ENCODE measurements at regions of chr17 and their contacts with region 1.

Region 1: DNA sequence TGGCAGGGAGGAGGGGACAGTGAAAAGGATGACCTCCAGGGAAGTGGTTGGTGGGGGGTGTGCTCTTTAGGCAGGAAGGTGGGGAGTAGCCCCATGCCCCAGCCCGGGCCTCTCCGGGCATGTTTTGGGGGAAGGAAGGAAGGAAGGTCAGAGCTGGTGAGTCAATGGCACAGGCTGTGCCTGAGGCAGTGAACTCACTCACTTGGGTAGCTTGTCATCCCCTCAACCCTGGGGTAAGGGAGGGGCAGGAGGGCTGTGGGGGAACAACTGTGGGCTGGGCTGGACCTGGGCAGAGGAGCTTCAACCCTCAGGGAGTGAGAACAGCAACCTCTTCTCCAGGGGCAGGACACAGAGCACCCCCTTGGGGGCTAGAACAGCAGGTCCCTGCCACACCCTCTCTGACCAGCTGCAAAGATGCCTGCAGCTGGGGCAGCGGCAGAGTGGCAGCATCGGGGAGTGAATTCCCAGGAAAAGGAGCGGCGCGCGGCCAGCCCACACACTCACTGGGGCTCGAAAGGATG is 6.3 kb downstream of the CSF3 start:
- DNase-seq: peak in 2 of 5 donors; percentile 43 to 59
- H3K4me3 ChIP-seq: no peak overlapping the region
- H3K27ac ChIP-seq: peak overlapping the region in 1 of 2 donors; percentile 41
- H3K4me1 ChIP-seq: peaks cover 23% of the 10 kb centered on the region
- H3K27me3 ChIP-seq: no peaks in the 10 kb centered on the region
- CTCF ChIP-seq: no peak
- EP300 ChIP-seq: no peak
- POLR2A ChIP-seq: no peak

Region 2: DNA sequence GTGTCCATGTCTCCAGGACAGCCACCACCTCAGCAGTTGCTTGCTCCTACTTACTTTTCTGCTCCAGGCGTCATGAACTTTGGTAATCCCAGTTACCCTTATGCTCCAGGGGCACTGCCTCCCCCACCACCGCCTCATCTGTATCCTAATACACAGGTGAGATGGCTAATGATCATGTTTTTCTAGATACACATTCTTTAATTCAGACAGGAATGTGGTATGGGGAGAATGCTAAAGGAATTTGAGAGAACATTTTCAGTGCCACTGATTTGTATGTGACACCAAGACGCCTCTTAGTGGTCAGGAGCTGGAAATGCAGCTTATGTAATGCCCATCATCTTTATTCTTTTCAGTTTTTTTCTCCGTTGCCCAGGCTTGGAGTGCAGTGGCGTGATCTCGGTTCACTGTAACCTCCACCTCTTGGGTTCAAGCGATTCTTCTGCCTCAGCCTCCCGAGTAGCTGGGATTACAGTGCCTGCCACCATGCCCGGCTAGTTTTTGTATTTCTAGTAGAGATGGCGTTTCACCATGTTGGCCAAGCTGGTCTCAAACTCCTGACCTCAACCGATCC is 146.8 kb after region 1 on chr17:
- intact Hi-C with region 1: loop called in 3 of 4 experiments (anchors 5 to 10 kb)
- DNase-seq: peak in 1 of 5 donors; percentile 58
- H3K4me3 ChIP-seq: no peak overlapping the region
- H3K27ac ChIP-seq: peak overlapping the region in 1 of 2 donors; percentile 22
- H3K4me1 ChIP-seq: no peaks in the 10 kb centered on the region
- H3K27me3 ChIP-seq: no peaks in the 10 kb centered on the region
- CTCF ChIP-seq: peak; percentile 28 to 91 (median 90)
- EP300 ChIP-seq: no peak
- POLR2A ChIP-seq: no peak

Measured in ovary (tissue), 10 donors.